ENCODE measurements at regions of chr18 and their contacts with region 1.

Region 1: GRCh38 chr18:32072321-32072720 is 19.4 kb upstream of the RNF138 start:
- DNase-seq: peak; percentile 48 to 76 (median 73)
- H3K4me3 ChIP-seq: no peak overlapping the region
- H3K27ac ChIP-seq: no peak overlapping the region
- H3K4me1 ChIP-seq: no peaks in the 10 kb centered on the region
- H3K27me3 ChIP-seq: no peaks in the 10 kb centered on the region

Region 2: GRCh38 chr18:31942999-31943865 is 129.1 kb before region 1 on chr18 and contains the start of gene TRAPPC8:
- CTCF ChIA-PET with region 1: interaction called, 10 read pairs
- POLR2A ChIA-PET with region 1: interaction called, 4 read pairs
- DNase-seq: peak; percentile 97 to 98 (median 98)
- H3K4me3 ChIP-seq: peak within 1 kb of the TSS; percentile 86 to 99 (median 97)
- H3K27ac ChIP-seq: peak within 1 kb of the TSS; percentile 96 to 98
- H3K4me1 ChIP-seq: peaks cover 11 to 37% (median 22%) of the 10 kb centered on the region in 4 experiments
- H3K27me3 ChIP-seq: no peaks in the 10 kb centered on the region

Region 3: DNA sequence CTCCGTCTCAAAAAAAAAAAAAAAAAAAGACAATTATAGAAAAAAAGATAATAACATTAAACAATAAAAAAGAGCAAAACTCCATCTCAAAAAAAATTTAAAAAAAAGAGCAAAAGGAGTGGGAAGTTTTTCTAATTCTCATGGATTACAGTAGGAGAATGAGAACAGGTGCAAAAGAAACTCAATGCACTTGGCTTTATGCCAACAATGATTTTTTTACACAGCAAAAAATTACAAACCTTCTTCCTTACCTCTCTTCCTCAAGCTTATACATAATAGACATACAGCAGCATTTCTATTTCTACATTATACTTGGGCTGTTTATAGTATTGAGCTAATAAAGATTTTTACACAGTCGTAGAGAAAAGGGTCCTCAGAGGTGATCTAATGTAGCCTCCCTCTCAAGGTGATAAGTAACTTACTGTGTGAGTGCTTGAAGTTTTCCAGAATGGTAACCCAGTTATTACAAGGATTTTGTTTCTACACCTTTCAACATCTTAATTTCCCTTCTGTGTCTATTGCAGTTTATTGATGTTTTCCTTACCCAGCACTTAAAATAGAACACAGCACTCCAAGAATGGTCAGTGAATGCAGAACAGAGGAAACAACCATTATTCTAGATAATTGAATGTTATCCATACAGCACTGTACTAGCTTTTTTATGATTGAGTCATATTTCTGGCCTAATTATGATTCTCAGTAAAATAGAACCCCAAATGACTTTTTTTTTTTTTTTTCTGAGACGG is 15.5 kb before region 1 on chr18:
- CTCF ChIA-PET with region 1: interaction called, 20 read pairs
- POLR2A ChIA-PET with region 1: no interaction called
- DNase-seq: peak in 2 of 3 donors; percentile 38 to 43
- H3K4me3 ChIP-seq: no peak overlapping the region
- H3K27ac ChIP-seq: no peak overlapping the region
- H3K4me1 ChIP-seq: peaks cover 2 to 27% (median 6%) of the 10 kb centered on the region in 4 experiments
- H3K27me3 ChIP-seq: no peaks in the 10 kb centered on the region

Region 4: GRCh38 chr18:32086861-32087260 is 14.5 kb after region 1 on chr18:
- CTCF ChIA-PET with region 1: interaction called, 21 read pairs
- POLR2A ChIA-PET with region 1: interaction called, 3 read pairs
- DNase-seq: no peak
- H3K4me3 ChIP-seq: no peak overlapping the region
- H3K27ac ChIP-seq: no peak overlapping the region
- H3K4me1 ChIP-seq: peaks cover 19 to 47% (median 33%) of the 10 kb centered on the region in 4 experiments
- H3K27me3 ChIP-seq: no peaks in the 10 kb centered on the region

Region 5: GRCh38 chr18:32138332-32138982 is 66.1 kb after region 1 on chr18:
- CTCF ChIA-PET with region 1: no interaction called
- POLR2A ChIA-PET with region 1: no interaction called
- DNase-seq: peak; percentile 42 to 88 (median 79)
- H3K4me3 ChIP-seq: peak overlapping the region in 3 of 7 experiments; percentile 16 to 47 (median 40)
- H3K27ac ChIP-seq: peak overlapping the region in 1 of 2 experiments; percentile 74
- H3K4me1 ChIP-seq: peaks cover 0 to 11% (median 5%) of the 10 kb centered on the region in 4 experiments
- H3K27me3 ChIP-seq: no peaks in the 10 kb centered on the region

Region 6: GRCh38 chr18:32252141-32252860 is 180.0 kb after region 1 on chr18:
- CTCF ChIA-PET with region 1: no interaction called
- POLR2A ChIA-PET with region 1: no interaction called
- DNase-seq: peak; percentile 27 to 68 (median 53)
- H3K4me3 ChIP-seq: no peak overlapping the region
- H3K27ac ChIP-seq: no peak overlapping the region
- H3K4me1 ChIP-seq: peaks cover 8 to 48% (median 29%) of the 10 kb centered on the region in 4 experiments
- H3K27me3 ChIP-seq: no peaks in the 10 kb centered on the region